Thyroid gland (tissue), 4 donors: ENCODE measurements at regions of chr2 and their contacts with region 1.

Region 1: GRCh38 chr2:85635636-85636035 is 19.6 kb downstream of the USP39 start:
- DNase-seq: no peak
- H3K4me3 ChIP-seq: no peak overlapping the region
- H3K27ac ChIP-seq: no peak overlapping the region
- H3K4me1 ChIP-seq: peaks cover 0 to 6% of the 10 kb centered on the region in 2 donors
- H3K27me3 ChIP-seq: no peaks in the 10 kb centered on the region
- CTCF ChIP-seq: no peak
- POLR2A ChIP-seq: no peak

Region 2: DNA sequence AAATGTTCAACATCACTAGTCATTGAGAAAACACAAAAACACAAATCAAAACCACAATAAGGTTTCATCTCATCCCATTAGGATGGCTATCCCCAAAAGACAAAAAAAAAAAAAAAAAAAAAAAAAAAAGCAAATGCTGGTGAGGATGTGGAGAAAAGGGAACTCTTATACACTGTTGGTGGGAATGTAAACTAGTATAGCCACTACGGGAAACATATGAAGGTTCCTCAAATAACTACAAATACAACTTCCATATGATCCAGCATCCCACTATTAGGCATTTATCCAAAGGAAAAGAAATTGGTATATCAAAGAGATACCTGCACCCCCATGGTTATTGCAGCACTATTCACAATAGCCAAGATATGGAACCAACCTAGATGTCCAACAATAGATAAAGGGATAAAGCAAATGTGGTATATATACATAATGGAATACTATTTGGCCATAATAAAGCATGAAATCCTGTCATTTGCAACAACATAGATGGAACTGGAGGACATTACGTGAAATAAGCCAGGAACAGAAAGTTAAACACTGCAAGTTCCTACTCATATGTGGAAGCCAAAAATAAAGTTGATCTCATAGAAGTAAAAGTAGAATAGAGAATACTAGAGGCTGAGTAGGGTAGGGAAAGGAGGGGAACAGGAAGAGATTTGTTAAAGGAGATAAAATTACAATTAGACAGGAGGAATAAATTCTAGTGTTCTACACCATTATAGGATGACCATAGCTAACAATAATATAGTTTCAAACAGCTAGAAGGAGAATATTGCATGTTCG is 461.7 kb after region 1 on chr2:
- intact Hi-C with region 1: loop called (anchors 10 kb)
- DNase-seq: no peak
- H3K4me3 ChIP-seq: no peak overlapping the region
- H3K27ac ChIP-seq: no peak overlapping the region
- H3K4me1 ChIP-seq: no peaks in the 10 kb centered on the region
- H3K27me3 ChIP-seq: no peaks in the 10 kb centered on the region
- CTCF ChIP-seq: no peak
- POLR2A ChIP-seq: no peak